Naive thymus-derived CD4-positive, alpha-beta T cell (primary cell): ENCODE measurements at regions of chr11 and their contacts with region 1.

Region 1: GRCh38 chr11:83140696-83141455 is 16.1 kb upstream of the PCF11 start:
- DNase-seq: no peak
- ATAC-seq: no peak
- H3K4me3 ChIP-seq: no peak overlapping the region
- H3K4me3 Mint-ChIP-seq: no peak overlapping the region
- H3K27ac ChIP-seq: no peak overlapping the region
- H3K27ac Mint-ChIP-seq: peak overlapping the region in 1 of 9 donors; percentile 3
- H3K4me1 ChIP-seq: no peaks in the 10 kb centered on the region
- H3K4me1 Mint-ChIP-seq: peaks cover 0 to 2% (median 0%) of the 10 kb centered on the region in 7 donors
- H3K27me3 ChIP-seq: no peaks in the 10 kb centered on the region
- H3K27me3 Mint-ChIP-seq: peaks cover 0 to 7% (median 0%) of the 10 kb centered on the region in 5 donors

Region 2: GRCh38 chr11:83033972-83034672 is 106.8 kb before region 1 on chr11:
- CTCF ChIA-PET with region 1: no interaction called
- POLR2A ChIA-PET with region 1: no interaction called
- intact Hi-C with region 1: no loop called
- DNase-seq: no peak
- ATAC-seq: no peak
- H3K4me3 ChIP-seq: no peak overlapping the region
- H3K4me3 Mint-ChIP-seq: peak overlapping the region in 1 of 10 donors; percentile 25
- H3K27ac ChIP-seq: no peak overlapping the region
- H3K27ac Mint-ChIP-seq: peak overlapping the region in 5 of 9 donors; percentile 2 to 53 (median 36)
- H3K4me1 ChIP-seq: peaks cover 0 to 17% of the 10 kb centered on the region in 2 donors
- H3K4me1 Mint-ChIP-seq: peaks cover 18 to 55% (median 39%) of the 10 kb centered on the region in 7 donors
- H3K27me3 ChIP-seq: no peaks in the 10 kb centered on the region
- H3K27me3 Mint-ChIP-seq: no peaks in the 10 kb centered on the region

Region 3: GRCh38 chr11:83105168-83105567 is 35.7 kb before region 1 on chr11:
- CTCF ChIA-PET with region 1: no interaction called
- POLR2A ChIA-PET with region 1: no interaction called
- intact Hi-C with region 1: loop called in 1 of 2 experiments (anchors 5 kb)
- DNase-seq: no peak
- ATAC-seq: no peak
- H3K4me3 ChIP-seq: no peak overlapping the region
- H3K4me3 Mint-ChIP-seq: no peak overlapping the region
- H3K27ac ChIP-seq: no peak overlapping the region
- H3K27ac Mint-ChIP-seq: no peak overlapping the region
- H3K4me1 ChIP-seq: no peaks in the 10 kb centered on the region
- H3K4me1 Mint-ChIP-seq: no peaks in the 10 kb centered on the region
- H3K27me3 ChIP-seq: no peaks in the 10 kb centered on the region
- H3K27me3 Mint-ChIP-seq: peaks cover 0 to 21% (median 0%) of the 10 kb centered on the region in 5 donors

Region 4: DNA sequence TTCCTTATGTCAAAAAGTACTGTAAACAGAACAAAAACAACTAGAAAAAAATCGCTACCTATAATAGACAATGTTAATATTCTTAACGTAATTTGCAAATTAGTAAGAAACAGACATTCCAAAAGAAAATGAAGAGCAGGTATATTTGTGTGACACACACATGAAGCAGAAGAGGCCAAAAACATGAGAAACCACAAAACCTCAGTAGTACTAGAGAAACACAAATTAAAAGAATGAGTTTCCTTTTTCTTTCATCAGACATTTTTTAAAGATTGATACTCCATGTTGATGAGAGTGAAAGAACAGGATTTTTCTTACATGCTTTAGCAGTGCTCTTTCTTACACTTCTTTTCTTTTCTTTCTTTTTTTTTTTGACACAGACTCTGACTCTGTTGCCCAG is 18.1 kb before region 1 on chr11:
- CTCF ChIA-PET with region 1: no interaction called
- POLR2A ChIA-PET with region 1: interaction called, 3 read pairs
- intact Hi-C with region 1: loop called in 1 of 2 experiments (anchors 1 kb)
- DNase-seq: peak in 5 of 9 donors; percentile 16 to 41 (median 37)
- ATAC-seq: peak; percentile 46
- H3K4me3 ChIP-seq: no peak overlapping the region
- H3K4me3 Mint-ChIP-seq: peak overlapping the region in 9 of 10 donors; percentile 0 to 76 (median 50)
- H3K27ac ChIP-seq: peak overlapping the region; percentile 52
- H3K27ac Mint-ChIP-seq: peak overlapping the region in 8 of 9 donors; percentile 77 to 98 (median 90)
- H3K4me1 ChIP-seq: peaks cover 5 to 37% of the 10 kb centered on the region in 2 donors
- H3K4me1 Mint-ChIP-seq: peaks cover 7 to 58% (median 55%) of the 10 kb centered on the region in 7 donors
- H3K27me3 ChIP-seq: no peaks in the 10 kb centered on the region
- H3K27me3 Mint-ChIP-seq: peaks cover 0 to 2% (median 0%) of the 10 kb centered on the region in 5 donors